AG04449 (cell line): ENCODE measurements at regions of chr11 and their contacts with region 1.

Region 1: GRCh38 chr11:60970369-60970774 is 1.1 kb upstream of the CD6 start:
- DNase-seq: no peak
- H3K4me3 ChIP-seq: no peak overlapping the region
- CTCF ChIP-seq: peak; percentile 89

Region 2: GRCh38 chr11:60871378-60872061 is 98.9 kb before region 1 on chr11:
- CTCF ChIA-PET with region 1: no interaction called
- POLR2A ChIA-PET with region 1: no interaction called
- DNase-seq: no peak
- H3K4me3 ChIP-seq: no peak overlapping the region
- CTCF ChIP-seq: no peak

Region 3: GRCh38 chr11:60950933-60951620 is 19.3 kb before region 1 on chr11:
- CTCF ChIA-PET with region 1: interaction called, 11 read pairs
- POLR2A ChIA-PET with region 1: no interaction called
- DNase-seq: no peak
- H3K4me3 ChIP-seq: peak overlapping the region; percentile 48
- CTCF ChIP-seq: no peak

Region 4: GRCh38 chr11:60959431-60959830 is 10.9 kb before region 1 on chr11:
- CTCF ChIA-PET with region 1: interaction called, 12 read pairs
- POLR2A ChIA-PET with region 1: no interaction called
- DNase-seq: no peak
- H3K4me3 ChIP-seq: no peak overlapping the region
- CTCF ChIP-seq: no peak

Region 5: DNA sequence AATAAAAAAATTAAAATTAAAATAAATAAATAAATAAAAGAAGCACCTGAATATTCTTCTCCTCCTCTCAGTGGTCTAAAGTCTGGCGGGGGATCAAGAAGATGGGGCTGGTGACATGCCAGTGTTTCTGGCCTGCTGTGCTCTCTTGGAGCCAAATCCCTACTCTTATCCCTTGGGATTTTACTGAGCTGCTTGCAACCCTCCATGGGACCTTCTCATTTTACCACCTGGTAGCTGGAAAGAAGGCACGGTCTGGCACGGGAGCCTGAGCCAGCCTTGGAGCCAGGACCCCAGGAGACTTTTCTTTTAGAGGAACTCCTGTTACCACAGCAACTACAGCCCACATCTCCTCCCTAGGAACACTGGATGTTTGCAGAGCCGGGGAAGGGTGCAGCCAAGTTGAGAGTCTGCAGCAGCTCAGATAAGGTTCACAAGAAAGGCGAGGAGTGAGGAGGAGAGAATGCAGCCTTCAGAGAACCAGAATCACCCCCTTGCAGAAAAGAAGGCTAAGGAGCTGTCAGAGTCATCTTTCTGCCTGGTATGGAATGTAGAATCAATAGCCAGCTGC is 22.6 kb after region 1 on chr11:
- CTCF ChIA-PET with region 1: no interaction called
- POLR2A ChIA-PET with region 1: no interaction called
- DNase-seq: no peak
- H3K4me3 ChIP-seq: no peak overlapping the region
- CTCF ChIP-seq: no peak

Region 6: GRCh38 chr11:61173456-61173855 is 203.1 kb after region 1 on chr11:
- CTCF ChIA-PET with region 1: interaction called, 16 read pairs
- POLR2A ChIA-PET with region 1: no interaction called
- DNase-seq: no peak
- H3K4me3 ChIP-seq: no peak overlapping the region
- CTCF ChIP-seq: no peak